ENCODE measurements at regions of chr2 and their contacts with region 1.

Region 1: GRCh38 chr2:60998628-60999545 is 18.6 kb upstream of the PEX13 start:
- DNase-seq: peak in 2 of 3 donors; percentile 57 to 69
- H3K4me3 ChIP-seq: no peak overlapping the region
- H3K4me3 Mint-ChIP-seq: no peak overlapping the region
- H3K27ac ChIP-seq: no peak overlapping the region
- H3K27ac Mint-ChIP-seq: peak overlapping the region in 2 of 7 donors; percentile 35 to 63
- H3K4me1 ChIP-seq: peaks cover 4 to 8% of the 10 kb centered on the region in 2 donors
- H3K4me1 Mint-ChIP-seq: peaks cover 15% of the 10 kb centered on the region
- H3K27me3 ChIP-seq: no peaks in the 10 kb centered on the region
- H3K27me3 Mint-ChIP-seq: peaks cover 0 to under 1% (median 0%) of the 10 kb centered on the region in 3 donors
- CTCF ChIP-seq: peak; percentile 87

Region 2: DNA sequence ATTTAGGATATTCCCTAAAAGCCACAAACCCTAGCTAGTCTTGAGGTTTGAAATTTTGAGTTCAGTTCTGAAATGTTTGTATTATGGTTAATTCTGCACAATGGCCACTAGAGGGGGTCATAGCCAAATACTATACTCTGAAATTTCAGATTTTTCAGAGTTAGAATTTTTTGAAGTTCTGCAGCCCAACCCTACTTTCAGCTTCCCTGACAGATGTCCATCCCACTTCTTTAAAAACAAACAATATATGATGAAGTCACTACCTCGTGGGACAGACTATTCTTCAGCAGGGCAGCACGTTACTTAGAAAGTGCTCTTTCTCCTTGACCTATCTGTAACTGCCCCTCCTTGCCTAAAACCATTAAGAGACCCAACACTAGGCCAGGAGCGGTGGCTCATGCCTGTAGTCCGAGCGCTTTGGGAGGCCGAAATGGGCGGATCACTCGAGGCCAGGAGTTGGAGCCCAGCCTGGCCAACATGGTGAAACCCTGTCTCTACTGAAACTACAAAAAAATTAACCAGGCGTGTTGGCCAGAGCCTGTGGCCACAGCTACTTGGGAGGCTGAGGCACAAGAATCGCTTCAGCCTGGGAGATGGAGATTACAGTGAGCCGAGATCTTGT is 291.0 kb before region 1 on chr2:
- intact Hi-C with region 1: loop called in 1 of 2 experiments (anchors 2 kb)
- DNase-seq: peak; percentile 27 to 48 (median 30)
- H3K4me3 ChIP-seq: no peak overlapping the region
- H3K4me3 Mint-ChIP-seq: no peak overlapping the region
- H3K27ac ChIP-seq: no peak overlapping the region
- H3K27ac Mint-ChIP-seq: peak overlapping the region in 3 of 7 donors; percentile 15 to 66 (median 30)
- H3K4me1 ChIP-seq: peaks cover 8 to 9% of the 10 kb centered on the region in 2 donors
- H3K4me1 Mint-ChIP-seq: peaks cover 11% of the 10 kb centered on the region
- H3K27me3 ChIP-seq: no peaks in the 10 kb centered on the region
- H3K27me3 Mint-ChIP-seq: no peaks in the 10 kb centered on the region
- CTCF ChIP-seq: peak; percentile 71

Region 3: GRCh38 chr2:60881047-60881932 is 117.6 kb before region 1 on chr2 and contains the start of gene REL:
- intact Hi-C with region 1: loop called in 1 of 2 experiments (anchors 10 kb)
- DNase-seq: peak; percentile 92 to 96 (median 92)
- H3K4me3 ChIP-seq: peak within 1 kb of the TSS; percentile 81 to 100 (median 82)
- H3K4me3 Mint-ChIP-seq: peak within 1 kb of the TSS; percentile 97 to 99
- H3K27ac ChIP-seq: peak within 1 kb of the TSS; percentile 94 to 99
- H3K27ac Mint-ChIP-seq: peak within 1 kb of the TSS; percentile 97 to 99 (median 98)
- H3K4me1 ChIP-seq: peaks cover 16 to 25% of the 10 kb centered on the region in 2 donors
- H3K4me1 Mint-ChIP-seq: peaks cover 23% of the 10 kb centered on the region
- H3K27me3 ChIP-seq: no peaks in the 10 kb centered on the region
- H3K27me3 Mint-ChIP-seq: peaks cover 0 to 4% (median 0%) of the 10 kb centered on the region in 3 donors
- CTCF ChIP-seq: no peak
- polyA plus RNA-seq, gene REL: 18.3 to 34.3 (median 20.3) TPM

Region 4: GRCh38 chr2:60926737-60927552 is 71.9 kb before region 1 on chr2:
- intact Hi-C with region 1: loop called (anchors 5 to 10 kb)
- DNase-seq: peak; percentile 80 to 94 (median 87)
- H3K4me3 ChIP-seq: peak overlapping the region in 2 of 3 experiments; percentile 13 to 67
- H3K4me3 Mint-ChIP-seq: peak overlapping the region; percentile 59 to 89
- H3K27ac ChIP-seq: peak overlapping the region; percentile 77 to 89
- H3K27ac Mint-ChIP-seq: peak overlapping the region; percentile 94 to 98 (median 97)
- H3K4me1 ChIP-seq: peaks cover 43 to 48% of the 10 kb centered on the region in 2 donors
- H3K4me1 Mint-ChIP-seq: peaks cover 44% of the 10 kb centered on the region
- H3K27me3 ChIP-seq: no peaks in the 10 kb centered on the region
- H3K27me3 Mint-ChIP-seq: no peaks in the 10 kb centered on the region
- CTCF ChIP-seq: no peak

Region 5: GRCh38 chr2:60961501-60961900 is 37.4 kb before region 1 on chr2:
- intact Hi-C with region 1: no loop called
- DNase-seq: peak; percentile 21 to 59 (median 47)
- H3K4me3 ChIP-seq: no peak overlapping the region
- H3K4me3 Mint-ChIP-seq: no peak overlapping the region
- H3K27ac ChIP-seq: peak overlapping the region in 1 of 2 donors; percentile 37
- H3K27ac Mint-ChIP-seq: peak overlapping the region in 2 of 7 donors; percentile 7 to 10
- H3K4me1 ChIP-seq: peaks cover 7 to 15% of the 10 kb centered on the region in 2 donors
- H3K4me1 Mint-ChIP-seq: peaks cover 11% of the 10 kb centered on the region
- H3K27me3 ChIP-seq: no peaks in the 10 kb centered on the region
- H3K27me3 Mint-ChIP-seq: no peaks in the 10 kb centered on the region
- CTCF ChIP-seq: no peak

Measured in CD14-positive monocyte (primary cell).